ENCODE measurements at regions of chr6 and their contacts with region 1.

Region 1: GRCh38 chr6:2999618-3000557 is at the start of gene NQO2:
- DNase-seq: peak; percentile 94
- H3K4me3 Mint-ChIP-seq: peak within 1 kb of the TSS; percentile 88
- H3K27ac Mint-ChIP-seq: peak within 1 kb of the TSS; percentile 83
- H3K4me1 Mint-ChIP-seq: peaks cover 35% of the 10 kb centered on the region
- H3K27me3 Mint-ChIP-seq: peaks cover 2% of the 10 kb centered on the region
- total RNA-seq, gene NQO2: 37.7 to 38.4 TPM

Region 2: DNA sequence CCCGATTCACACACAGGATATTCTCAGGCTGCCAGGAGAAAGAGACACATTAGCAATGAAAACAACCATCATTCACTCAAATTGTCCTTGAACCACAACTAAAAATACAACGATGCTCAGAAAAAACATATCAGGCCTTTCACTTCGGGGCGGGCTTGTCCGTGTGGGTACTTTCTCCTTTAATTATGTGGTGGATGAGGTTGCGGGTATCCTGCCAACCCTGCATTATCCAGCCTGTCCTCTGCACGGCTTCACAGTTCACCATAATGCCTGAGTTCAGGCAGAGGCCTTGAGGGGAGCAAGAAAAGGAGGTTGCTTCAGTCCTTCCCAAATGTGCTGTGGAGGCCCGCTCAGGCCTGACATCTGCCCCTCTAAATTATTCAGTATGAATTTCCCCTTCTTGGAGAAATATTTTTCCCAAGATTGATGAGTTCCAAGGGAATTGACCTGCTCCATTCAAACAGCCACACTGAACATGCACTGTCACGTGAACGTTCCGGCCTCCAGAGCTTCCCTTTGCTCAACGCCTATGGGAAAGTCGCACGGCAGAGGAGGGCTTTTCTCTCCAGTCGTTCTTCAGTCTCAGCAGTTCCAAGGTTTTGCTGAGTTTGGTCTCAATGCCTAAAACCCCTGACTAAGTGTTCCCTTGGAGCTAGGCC is 319.5 kb before region 1 on chr6:
- CTCF ChIA-PET with region 1: no interaction called
- POLR2A ChIA-PET with region 1: no interaction called
- DNase-seq: no peak
- H3K4me3 Mint-ChIP-seq: no peak overlapping the region
- H3K27ac Mint-ChIP-seq: no peak overlapping the region
- H3K4me1 Mint-ChIP-seq: no peaks in the 10 kb centered on the region
- H3K27me3 Mint-ChIP-seq: no peaks in the 10 kb centered on the region

Region 3: GRCh38 chr6:2911171-2911570 is 88.7 kb before region 1 on chr6:
- CTCF ChIA-PET with region 1: no interaction called
- POLR2A ChIA-PET with region 1: no interaction called
- DNase-seq: no peak
- H3K4me3 Mint-ChIP-seq: no peak overlapping the region
- H3K27ac Mint-ChIP-seq: no peak overlapping the region
- H3K4me1 Mint-ChIP-seq: peaks cover 22% of the 10 kb centered on the region
- H3K27me3 Mint-ChIP-seq: no peaks in the 10 kb centered on the region

Region 4: GRCh38 chr6:3052481-3053230 is 52.8 kb after region 1 on chr6:
- CTCF ChIA-PET with region 1: interaction called, 26 read pairs
- POLR2A ChIA-PET with region 1: interaction called, 26 read pairs
- DNase-seq: no peak
- H3K4me3 Mint-ChIP-seq: peak overlapping the region; percentile 72
- H3K27ac Mint-ChIP-seq: peak overlapping the region; percentile 51
- H3K4me1 Mint-ChIP-seq: peaks cover 33% of the 10 kb centered on the region
- H3K27me3 Mint-ChIP-seq: peaks cover 15% of the 10 kb centered on the region

Region 5: GRCh38 chr6:3061501-3061941 is 61.6 kb after region 1 on chr6:
- CTCF ChIA-PET with region 1: interaction called, 21 read pairs
- POLR2A ChIA-PET with region 1: interaction called, 17 read pairs
- DNase-seq: no peak
- H3K4me3 Mint-ChIP-seq: no peak overlapping the region
- H3K27ac Mint-ChIP-seq: no peak overlapping the region
- H3K4me1 Mint-ChIP-seq: peaks cover 42% of the 10 kb centered on the region
- H3K27me3 Mint-ChIP-seq: peaks cover 8% of the 10 kb centered on the region

Region 6: DNA sequence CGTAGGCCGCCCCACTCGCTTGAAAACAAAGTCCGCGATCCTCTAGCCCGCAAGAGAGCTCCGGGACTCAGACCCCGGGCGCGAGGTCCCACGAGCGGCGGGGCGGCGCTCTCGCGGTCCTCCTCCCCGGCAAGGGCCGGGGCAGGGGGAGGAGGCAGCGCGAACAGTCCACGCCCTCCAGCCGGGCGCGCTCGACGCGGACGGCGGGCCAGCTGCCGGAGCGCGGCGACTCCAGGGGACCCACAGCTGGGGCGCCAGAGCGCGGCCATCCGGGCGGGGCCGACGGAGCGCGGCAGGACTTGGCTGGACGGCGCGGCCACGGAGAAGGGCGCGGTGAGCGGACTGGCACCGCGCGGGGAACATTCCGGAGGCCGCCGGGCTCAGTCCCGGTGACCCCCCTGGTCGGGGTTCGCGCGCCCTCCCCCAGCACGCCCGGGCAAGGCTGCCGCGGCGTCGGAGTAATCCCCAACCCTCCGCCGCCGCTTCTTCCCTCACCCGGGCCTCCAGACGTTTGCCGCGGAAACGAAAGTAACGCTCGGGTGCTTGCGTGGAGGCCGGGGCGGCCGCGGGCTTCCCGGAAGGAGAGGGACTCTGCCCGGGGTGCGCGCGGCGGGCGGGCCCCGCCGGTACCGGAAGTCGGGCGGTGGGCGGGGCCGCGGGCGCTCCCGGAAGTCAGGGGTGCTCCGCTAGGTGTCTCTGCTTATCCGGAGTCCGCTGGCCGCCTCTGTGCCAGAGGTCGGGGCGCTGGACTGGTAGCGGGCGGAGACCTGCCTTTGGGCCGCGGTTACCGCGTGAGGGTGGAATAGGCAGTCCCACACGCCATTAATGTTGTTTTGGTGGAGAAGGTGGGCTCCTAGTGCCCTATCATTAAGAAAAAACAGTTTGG is 68.7 kb after region 1 on chr6 and contains the start of gene RIPK1:
- CTCF ChIA-PET with region 1: interaction called, 19 read pairs
- POLR2A ChIA-PET with region 1: interaction called, 17 read pairs
- DNase-seq: peak; percentile 95
- H3K4me3 Mint-ChIP-seq: peak within 1 kb of the TSS; percentile 98
- H3K27ac Mint-ChIP-seq: peak within 1 kb of the TSS; percentile 99
- H3K4me1 Mint-ChIP-seq: peaks cover 76% of the 10 kb centered on the region
- H3K27me3 Mint-ChIP-seq: no peaks in the 10 kb centered on the region
- total RNA-seq, gene RIPK1: 33.1 to 33.3 TPM